Naive thymus-derived CD4-positive, alpha-beta T cell (primary cell): ENCODE measurements at regions of chr20 and their contacts with region 1.

Region 1: DNA sequence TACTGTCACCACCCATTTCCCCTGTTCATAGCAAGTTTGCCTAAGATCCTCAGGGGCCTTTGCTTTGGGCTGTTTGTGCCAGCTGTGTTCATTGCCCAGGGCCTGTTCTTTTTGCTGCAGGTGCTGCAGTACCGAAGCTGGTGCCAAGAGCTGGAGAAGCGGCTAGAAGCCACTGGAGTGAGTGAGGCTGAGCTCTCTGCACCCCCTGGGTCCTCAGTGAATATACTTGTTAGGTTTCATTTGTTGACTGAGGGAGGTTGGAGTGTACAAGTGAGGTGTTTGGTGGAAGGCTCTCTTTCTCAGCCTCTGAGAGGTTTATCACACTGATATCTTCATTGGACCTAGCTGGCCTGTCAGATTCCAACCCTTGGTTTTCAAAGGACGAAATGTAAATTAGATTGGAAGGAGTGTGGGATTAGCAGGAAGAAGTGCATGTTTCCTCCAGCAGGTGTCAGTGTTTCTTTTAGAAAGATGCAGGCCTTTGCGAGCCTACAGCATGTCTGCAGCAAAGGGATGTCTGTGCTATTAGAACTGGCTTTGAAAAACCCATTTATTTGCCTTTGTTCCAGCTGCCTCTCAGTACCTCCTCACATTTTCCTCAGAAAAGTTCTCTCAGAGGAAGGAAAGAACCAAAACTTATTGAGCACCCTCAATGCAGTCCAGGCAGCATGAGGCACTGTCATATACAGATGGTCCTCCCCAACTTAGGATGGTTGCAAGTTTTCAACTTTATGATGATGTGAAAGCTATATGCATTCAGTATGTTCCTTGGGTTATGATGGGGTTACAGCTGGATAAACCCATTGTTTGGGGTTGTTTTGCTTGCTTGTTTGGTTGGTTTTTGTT is 8.3 kb downstream of the CEP250 start:
- DNase-seq: peak in 8 of 9 donors; percentile 40 to 70 (median 61)
- ATAC-seq: peak; percentile 90
- H3K4me3 ChIP-seq: no peak overlapping the region
- H3K4me3 Mint-ChIP-seq: no peak overlapping the region
- H3K27ac ChIP-seq: no peak overlapping the region
- H3K27ac Mint-ChIP-seq: peak overlapping the region in 3 of 9 donors; percentile 8 to 32 (median 13)
- H3K4me1 ChIP-seq: no peaks in the 10 kb centered on the region
- H3K4me1 Mint-ChIP-seq: peaks cover 5 to 14% (median 7%) of the 10 kb centered on the region in 7 donors
- H3K27me3 ChIP-seq: no peaks in the 10 kb centered on the region
- H3K27me3 Mint-ChIP-seq: no peaks in the 10 kb centered on the region

Region 2: GRCh38 chr20:35359335-35359950 is 104.2 kb before region 1 on chr20:
- CTCF ChIA-PET with region 1: no interaction called
- POLR2A ChIA-PET with region 1: no interaction called
- intact Hi-C with region 1: no loop called
- DNase-seq: no peak
- ATAC-seq: no peak
- H3K4me3 ChIP-seq: no peak overlapping the region
- H3K4me3 Mint-ChIP-seq: no peak overlapping the region
- H3K27ac ChIP-seq: no peak overlapping the region
- H3K27ac Mint-ChIP-seq: no peak overlapping the region
- H3K4me1 ChIP-seq: no peaks in the 10 kb centered on the region
- H3K4me1 Mint-ChIP-seq: peaks cover 0 to 8% (median 4%) of the 10 kb centered on the region in 7 donors
- H3K27me3 ChIP-seq: no peaks in the 10 kb centered on the region
- H3K27me3 Mint-ChIP-seq: no peaks in the 10 kb centered on the region

Region 3: GRCh38 chr20:35490736-35491181 is 27.1 kb after region 1 on chr20:
- CTCF ChIA-PET with region 1: interaction called, 5 read pairs
- POLR2A ChIA-PET with region 1: interaction called, 7 read pairs
- intact Hi-C with region 1: loop called in 1 of 2 experiments (anchors 2 kb)
- DNase-seq: peak; percentile 27 to 77 (median 67)
- ATAC-seq: peak; percentile 99
- H3K4me3 ChIP-seq: peak overlapping the region; percentile 92
- H3K4me3 Mint-ChIP-seq: peak overlapping the region; percentile 99 to 100 (median 99)
- H3K27ac ChIP-seq: peak overlapping the region; percentile 84
- H3K27ac Mint-ChIP-seq: peak overlapping the region; percentile 98 to 100 (median 99)
- H3K4me1 ChIP-seq: peaks cover 23 to 27% of the 10 kb centered on the region in 2 donors
- H3K4me1 Mint-ChIP-seq: peaks cover 47 to 92% (median 72%) of the 10 kb centered on the region in 7 donors
- H3K27me3 ChIP-seq: no peaks in the 10 kb centered on the region
- H3K27me3 Mint-ChIP-seq: no peaks in the 10 kb centered on the region

Region 4: DNA sequence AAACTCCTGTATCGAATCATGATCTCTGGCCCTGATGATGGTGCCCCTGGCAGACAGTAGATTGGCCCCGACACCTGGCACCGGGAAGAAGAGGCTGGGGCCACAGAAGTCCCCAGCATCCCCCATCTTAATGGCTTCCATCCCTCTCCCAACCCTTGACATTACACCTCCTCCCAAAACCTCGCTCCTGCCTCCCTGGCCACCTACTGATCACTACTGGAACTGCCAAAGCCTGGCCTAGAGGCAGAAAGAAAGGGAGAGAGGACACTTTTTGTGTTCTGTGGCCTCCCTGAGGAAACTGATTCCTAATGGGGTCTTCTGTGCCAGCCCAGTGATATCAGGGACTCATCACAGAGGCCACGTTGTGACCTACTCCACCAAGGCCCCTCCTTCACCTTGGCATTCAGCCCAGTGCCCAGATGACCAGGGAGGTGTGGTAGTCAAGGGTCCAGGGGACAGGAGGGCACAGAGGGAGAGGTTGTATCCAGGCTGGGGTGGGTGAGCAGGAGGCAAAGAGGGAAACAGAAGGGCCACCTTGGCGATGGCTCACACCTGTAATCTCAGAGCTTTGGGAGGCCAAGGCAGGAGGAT is 59.7 kb after region 1 on chr20:
- CTCF ChIA-PET with region 1: interaction called, 5 read pairs
- POLR2A ChIA-PET with region 1: no interaction called
- intact Hi-C with region 1: loop called (anchors 1 kb)
- DNase-seq: peak in 2 of 9 donors; percentile 10 to 23
- ATAC-seq: peak; percentile 65
- H3K4me3 ChIP-seq: no peak overlapping the region
- H3K4me3 Mint-ChIP-seq: no peak overlapping the region
- H3K27ac ChIP-seq: no peak overlapping the region
- H3K27ac Mint-ChIP-seq: peak overlapping the region in 1 of 9 donors; percentile 12
- H3K4me1 ChIP-seq: no peaks in the 10 kb centered on the region
- H3K4me1 Mint-ChIP-seq: peaks cover 0 to 2% (median 0%) of the 10 kb centered on the region in 7 donors
- H3K27me3 ChIP-seq: no peaks in the 10 kb centered on the region
- H3K27me3 Mint-ChIP-seq: no peaks in the 10 kb centered on the region

Region 5: GRCh38 chr20:35601008-35601973 is 137.6 kb after region 1 on chr20:
- CTCF ChIA-PET with region 1: interaction called, 6 read pairs
- POLR2A ChIA-PET with region 1: no interaction called
- intact Hi-C with region 1: loop called (anchors 2 to 5 kb)
- DNase-seq: peak; percentile 66 to 82 (median 77)
- ATAC-seq: peak; percentile 95
- H3K4me3 ChIP-seq: peak overlapping the region; percentile 72
- H3K4me3 Mint-ChIP-seq: peak overlapping the region; percentile 72 to 84 (median 80)
- H3K27ac ChIP-seq: peak overlapping the region; percentile 36
- H3K27ac Mint-ChIP-seq: peak overlapping the region in 1 of 9 donors; percentile 10
- H3K4me1 ChIP-seq: peaks cover 5 to 6% of the 10 kb centered on the region in 2 donors
- H3K4me1 Mint-ChIP-seq: peaks cover 0 to 11% (median 6%) of the 10 kb centered on the region in 7 donors
- H3K27me3 ChIP-seq: peaks cover 0 to 5% of the 10 kb centered on the region in 2 donors
- H3K27me3 Mint-ChIP-seq: peaks cover 0 to 65% (median 5%) of the 10 kb centered on the region in 5 donors

Region 6: GRCh38 chr20:35699127-35699975 is 235.7 kb after region 1 on chr20 and contains the starts of genes NFS1 and ROMO1:
- CTCF ChIA-PET with region 1: no interaction called
- POLR2A ChIA-PET with region 1: no interaction called
- intact Hi-C with region 1: loop called in 1 of 2 experiments (anchors 1 kb)
- DNase-seq: peak; percentile 71 to 87 (median 82)
- ATAC-seq: peak; percentile 92
- H3K4me3 ChIP-seq: peak within 1 kb of the TSS; percentile 89
- H3K4me3 Mint-ChIP-seq: peak within 1 kb of the TSS; percentile 90 to 99 (median 98)
- H3K27ac ChIP-seq: peak within 1 kb of the TSS; percentile 87
- H3K27ac Mint-ChIP-seq: peak within 1 kb of the TSS; percentile 95 to 99 (median 97)
- H3K4me1 ChIP-seq: peaks cover 13 to 16% of the 10 kb centered on the region in 2 donors
- H3K4me1 Mint-ChIP-seq: peaks cover 15 to 66% (median 52%) of the 10 kb centered on the region in 7 donors
- H3K27me3 ChIP-seq: no peaks in the 10 kb centered on the region
- H3K27me3 Mint-ChIP-seq: no peaks in the 10 kb centered on the region
- total RNA-seq, gene NFS1: 18.2 to 41.1 (median 35.0) TPM
- total RNA-seq, gene ROMO1: 33.2 to 85.5 (median 38.5) TPM

Region 7: GRCh38 chr20:35883778-35884540 is 420.3 kb after region 1 on chr20:
- CTCF ChIA-PET with region 1: interaction called, 22 read pairs
- POLR2A ChIA-PET with region 1: no interaction called
- intact Hi-C with region 1: loop called (anchors 1 to 2 kb)
- DNase-seq: peak; percentile 26 to 69 (median 60)
- ATAC-seq: peak; percentile 93
- H3K4me3 ChIP-seq: no peak overlapping the region
- H3K4me3 Mint-ChIP-seq: peak overlapping the region in 1 of 10 donors; percentile 3
- H3K27ac ChIP-seq: no peak overlapping the region
- H3K27ac Mint-ChIP-seq: peak overlapping the region in 8 of 9 donors; percentile 10 to 74 (median 51)
- H3K4me1 ChIP-seq: no peaks in the 10 kb centered on the region
- H3K4me1 Mint-ChIP-seq: peaks cover 10 to 22% (median 16%) of the 10 kb centered on the region in 7 donors
- H3K27me3 ChIP-seq: no peaks in the 10 kb centered on the region
- H3K27me3 Mint-ChIP-seq: no peaks in the 10 kb centered on the region

Region 8: GRCh38 chr20:35947489-35947888 is 483.8 kb after region 1 on chr20:
- CTCF ChIA-PET with region 1: interaction called, 3 read pairs
- POLR2A ChIA-PET with region 1: no interaction called
- intact Hi-C with region 1: loop called in 1 of 2 experiments (anchors 1 kb)
- DNase-seq: peak in 3 of 9 donors; percentile 16 to 28 (median 21)
- ATAC-seq: peak; percentile 70
- H3K4me3 ChIP-seq: no peak overlapping the region
- H3K4me3 Mint-ChIP-seq: no peak overlapping the region
- H3K27ac ChIP-seq: no peak overlapping the region
- H3K27ac Mint-ChIP-seq: peak overlapping the region in 5 of 9 donors; percentile 36 to 74 (median 61)
- H3K4me1 ChIP-seq: peaks cover 3 to 9% of the 10 kb centered on the region in 2 donors
- H3K4me1 Mint-ChIP-seq: peaks cover 9 to 23% (median 14%) of the 10 kb centered on the region in 7 donors
- H3K27me3 ChIP-seq: no peaks in the 10 kb centered on the region
- H3K27me3 Mint-ChIP-seq: no peaks in the 10 kb centered on the region